Sigmoid colon (tissue), 7 donors: ENCODE measurements at regions of chr12 and their contacts with region 1.

Region 1: DNA sequence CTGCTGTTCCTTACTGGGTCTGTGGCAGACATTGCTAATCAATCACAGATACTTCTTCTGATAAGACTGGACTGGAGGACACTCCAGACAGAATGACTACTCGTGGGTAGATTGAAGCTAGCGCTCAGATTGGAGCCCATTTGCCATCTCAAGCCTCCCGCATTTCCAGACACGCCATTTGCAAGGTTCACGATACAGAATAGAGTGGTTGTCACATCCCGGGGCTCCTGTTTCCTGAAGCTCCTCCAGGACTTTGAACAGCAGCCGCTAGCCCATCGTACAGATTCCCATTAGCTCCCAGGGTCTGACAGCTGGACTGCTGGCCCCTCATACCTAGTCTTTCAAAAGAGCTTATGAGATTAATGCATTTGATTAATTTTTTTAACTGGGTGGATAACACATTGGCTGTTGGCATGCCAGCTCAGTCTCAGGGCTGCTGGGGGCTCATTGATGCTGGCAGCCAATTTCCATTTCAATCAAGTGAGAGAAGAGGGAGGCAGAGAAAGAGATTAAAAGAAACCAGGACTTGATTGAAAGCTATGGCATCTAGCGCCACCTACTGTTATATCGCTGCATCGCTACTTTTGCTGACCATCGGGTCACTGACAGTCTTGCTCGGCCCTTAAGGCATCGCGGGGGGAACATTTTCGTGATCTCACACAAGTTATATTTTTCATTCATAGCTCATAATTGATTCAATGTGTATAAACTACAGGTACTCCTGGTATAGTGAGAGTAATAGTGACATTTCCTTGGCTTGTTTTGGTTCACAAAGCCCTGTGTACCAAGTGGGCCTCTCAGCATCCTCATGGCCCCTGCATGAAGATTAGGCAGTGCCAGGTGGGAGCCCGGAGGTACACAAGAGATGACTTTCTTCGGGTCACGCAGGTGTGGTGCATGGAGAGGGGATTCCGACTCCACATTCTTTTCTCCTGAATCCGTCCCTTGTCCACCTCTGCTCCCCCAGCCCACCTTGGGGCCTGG is 78.6 kb downstream of the CCDC60 start:
- DNase-seq: peak; percentile 82
- H3K4me3 ChIP-seq: no peak overlapping the region
- H3K27ac ChIP-seq: peak overlapping the region in 2 of 4 donors; percentile 41 to 62
- H3K4me1 ChIP-seq: peaks cover 0 to 28% (median 20%) of the 10 kb centered on the region in 4 donors
- H3K27me3 ChIP-seq: no peaks in the 10 kb centered on the region
- CTCF ChIP-seq: peak; percentile 83 to 87 (median 85)
- EP300 ChIP-seq: no peak
- POLR2A ChIP-seq: no peak

Region 2: DNA sequence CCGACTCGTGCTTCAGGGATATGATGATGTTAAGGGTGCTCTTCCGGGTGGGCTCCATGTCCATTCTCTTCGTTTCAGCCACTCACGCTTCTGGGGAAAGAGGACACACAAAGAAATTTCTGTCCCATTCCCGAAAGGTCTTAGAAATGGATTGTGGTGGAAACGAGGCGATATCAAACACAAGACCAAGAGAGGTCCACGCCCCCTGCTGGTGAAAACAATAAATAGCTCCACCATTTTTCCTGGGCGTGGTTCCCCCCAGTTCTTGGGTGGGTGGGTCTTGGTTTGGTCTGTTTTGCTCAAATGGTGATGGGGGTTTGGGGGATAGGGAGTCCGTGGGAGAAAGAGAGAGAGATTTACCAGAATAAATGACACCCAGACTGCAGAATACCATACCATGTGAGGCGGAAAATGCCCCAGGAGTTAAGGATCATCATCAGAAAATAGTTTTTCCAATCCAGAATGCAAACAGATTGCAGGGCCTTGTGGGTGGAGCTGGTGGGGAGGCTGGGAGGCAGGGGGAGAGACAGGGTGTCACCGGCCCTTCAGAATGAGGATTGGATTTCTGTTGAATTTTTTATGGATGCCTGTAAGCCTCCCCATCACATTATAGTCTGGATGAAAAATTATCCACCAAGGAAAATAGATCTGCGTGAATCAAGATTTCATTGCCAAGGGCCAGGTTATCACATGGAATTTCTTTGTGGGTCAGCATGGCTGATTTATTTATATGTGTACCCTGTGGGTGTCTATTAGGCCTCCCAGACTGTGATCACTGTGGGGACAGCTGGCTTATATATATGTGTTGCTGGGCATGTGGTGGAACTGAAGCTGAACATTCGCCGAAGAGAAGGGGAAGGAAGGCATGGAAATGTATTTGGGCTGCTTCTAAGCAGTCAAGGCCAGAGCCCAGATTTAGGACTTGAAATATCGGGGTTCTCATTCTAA is 376.0 kb before region 1 on chr12:
- intact Hi-C with region 1: loop called (anchors 5 kb)
- DNase-seq: no peak
- H3K4me3 ChIP-seq: no peak overlapping the region
- H3K27ac ChIP-seq: no peak overlapping the region
- H3K4me1 ChIP-seq: no peaks in the 10 kb centered on the region
- H3K27me3 ChIP-seq: peaks cover 0 to 6% (median 0%) of the 10 kb centered on the region in 3 donors
- CTCF ChIP-seq: peak; percentile 26 to 55 (median 46)
- EP300 ChIP-seq: no peak
- POLR2A ChIP-seq: no peak

Region 3: DNA sequence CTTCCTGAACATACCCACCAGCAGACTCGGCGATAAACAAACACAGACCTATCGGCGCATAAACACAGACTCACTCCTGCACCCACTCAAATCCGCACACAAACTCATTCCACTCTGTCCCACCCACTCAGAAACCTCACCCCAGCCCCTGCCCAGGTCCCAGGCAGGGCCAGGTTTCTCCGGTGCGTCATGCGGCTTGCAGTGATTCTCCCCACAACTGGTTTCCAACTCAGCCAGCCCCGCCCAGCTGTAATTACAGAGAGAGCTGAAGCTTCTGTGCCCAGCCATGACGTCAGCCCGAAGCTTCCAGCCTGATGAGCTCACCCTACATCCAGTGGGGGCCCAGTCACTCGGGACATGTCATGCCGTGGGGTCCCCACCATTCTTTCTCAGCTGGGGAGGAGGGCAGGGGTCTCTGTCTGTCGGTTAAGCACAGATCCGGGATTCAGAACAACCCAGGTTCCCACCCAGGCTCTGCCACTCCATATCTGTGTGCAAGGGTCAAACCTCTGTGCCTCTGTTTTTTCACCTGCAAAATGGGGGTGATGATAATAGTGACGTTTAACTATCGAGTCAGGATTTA is 236.7 kb before region 1 on chr12:
- intact Hi-C with region 1: loop called (anchors 2 kb)
- DNase-seq: peak; percentile 99
- H3K4me3 ChIP-seq: peak overlapping the region; percentile 20 to 55 (median 40)
- H3K27ac ChIP-seq: peak overlapping the region; percentile 91 to 99 (median 96)
- H3K4me1 ChIP-seq: peaks cover 0 to 19% (median 16%) of the 10 kb centered on the region in 4 donors
- H3K27me3 ChIP-seq: no peaks in the 10 kb centered on the region
- CTCF ChIP-seq: no peak
- EP300 ChIP-seq: peak in 2 of 4 donors; percentile 63 to 92
- POLR2A ChIP-seq: peak in 1 of 2 donors; percentile 41

Region 4: GRCh38 chr12:119328111-119328510 is 85.0 kb before region 1 on chr12:
- intact Hi-C with region 1: loop called (anchors 2 kb)
- DNase-seq: peak; percentile 69
- H3K4me3 ChIP-seq: no peak overlapping the region
- H3K27ac ChIP-seq: peak overlapping the region; percentile 80 to 82 (median 82)
- H3K4me1 ChIP-seq: peaks cover 0 to 50% (median 45%) of the 10 kb centered on the region in 4 donors
- H3K27me3 ChIP-seq: no peaks in the 10 kb centered on the region
- CTCF ChIP-seq: peak in 3 of 4 experiments; percentile 21 to 40 (median 25)
- EP300 ChIP-seq: no peak
- POLR2A ChIP-seq: no peak

Region 5: GRCh38 chr12:119479121-119479659 is 66.1 kb after region 1 on chr12:
- intact Hi-C with region 1: no loop called
- DNase-seq: no peak
- H3K4me3 ChIP-seq: no peak overlapping the region
- H3K27ac ChIP-seq: no peak overlapping the region
- H3K4me1 ChIP-seq: peaks cover 0 to 11% (median 2%) of the 10 kb centered on the region in 4 donors
- H3K27me3 ChIP-seq: no peaks in the 10 kb centered on the region
- CTCF ChIP-seq: no peak
- EP300 ChIP-seq: no peak
- POLR2A ChIP-seq: no peak